GM10248 (cell line): ENCODE measurements at regions of chr3 and their contacts with region 1.

Region 1: DNA sequence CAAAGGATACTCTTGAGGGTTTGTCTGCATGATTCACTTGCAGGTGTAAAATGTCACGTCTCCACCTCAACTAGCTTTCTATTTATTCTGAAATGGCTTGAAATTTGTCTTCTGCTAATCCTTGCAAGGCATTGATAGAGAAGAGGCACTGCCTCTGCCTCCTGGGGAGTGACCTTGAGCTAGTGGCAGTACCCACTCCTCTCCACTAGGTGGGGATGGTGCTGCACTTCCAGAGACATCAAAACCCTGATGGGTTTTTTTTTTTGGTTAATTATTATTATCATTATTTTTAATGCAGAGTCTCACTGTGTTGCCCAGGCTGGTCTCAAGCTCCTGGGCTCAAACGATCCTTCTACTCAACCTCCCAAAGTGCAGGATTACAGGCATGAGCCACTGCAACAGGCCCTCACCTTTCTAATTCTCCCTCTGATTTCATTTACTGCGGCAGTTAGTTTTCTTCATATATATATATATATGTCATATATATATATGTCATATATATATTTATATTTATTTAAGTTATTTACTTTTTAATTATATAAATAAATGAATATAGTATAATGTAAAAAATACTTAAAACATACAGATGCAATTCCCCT is 117.6 kb upstream of the EIF1B start:
- DNase-seq: peak; percentile 73
- CTCF ChIP-seq: peak; percentile 82

Region 2: DNA sequence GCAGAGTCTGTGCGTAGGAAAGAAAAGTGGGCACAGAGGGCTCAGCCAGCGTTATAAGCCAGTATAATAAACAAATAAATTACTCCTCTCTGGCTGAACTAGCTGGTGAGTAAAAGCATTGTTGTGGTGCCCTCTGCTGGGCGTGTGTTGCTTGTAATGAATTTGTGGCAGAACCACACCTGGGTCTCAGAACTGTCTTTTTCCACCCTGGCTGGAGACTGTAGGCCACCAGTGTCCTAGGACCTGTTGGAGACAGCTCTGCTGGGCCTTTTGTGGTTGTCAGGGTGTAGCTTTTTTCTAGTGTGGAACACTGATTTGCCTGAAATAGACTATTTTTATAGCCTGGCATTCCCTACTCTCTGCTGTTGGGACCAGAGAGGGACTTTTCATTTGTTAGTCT is 12.9 kb before region 1 on chr3:
- CTCF ChIA-PET with region 1: interaction called, 162 read pairs
- POLR2A ChIA-PET with region 1: no interaction called
- DNase-seq: peak; percentile 54
- CTCF ChIP-seq: peak; percentile 78

Region 3: GRCh38 chr3:40243056-40243455 is 51.1 kb after region 1 on chr3:
- CTCF ChIA-PET with region 1: interaction called, 12 read pairs
- POLR2A ChIA-PET with region 1: no interaction called
- DNase-seq: no peak
- CTCF ChIP-seq: no peak

Region 4: DNA sequence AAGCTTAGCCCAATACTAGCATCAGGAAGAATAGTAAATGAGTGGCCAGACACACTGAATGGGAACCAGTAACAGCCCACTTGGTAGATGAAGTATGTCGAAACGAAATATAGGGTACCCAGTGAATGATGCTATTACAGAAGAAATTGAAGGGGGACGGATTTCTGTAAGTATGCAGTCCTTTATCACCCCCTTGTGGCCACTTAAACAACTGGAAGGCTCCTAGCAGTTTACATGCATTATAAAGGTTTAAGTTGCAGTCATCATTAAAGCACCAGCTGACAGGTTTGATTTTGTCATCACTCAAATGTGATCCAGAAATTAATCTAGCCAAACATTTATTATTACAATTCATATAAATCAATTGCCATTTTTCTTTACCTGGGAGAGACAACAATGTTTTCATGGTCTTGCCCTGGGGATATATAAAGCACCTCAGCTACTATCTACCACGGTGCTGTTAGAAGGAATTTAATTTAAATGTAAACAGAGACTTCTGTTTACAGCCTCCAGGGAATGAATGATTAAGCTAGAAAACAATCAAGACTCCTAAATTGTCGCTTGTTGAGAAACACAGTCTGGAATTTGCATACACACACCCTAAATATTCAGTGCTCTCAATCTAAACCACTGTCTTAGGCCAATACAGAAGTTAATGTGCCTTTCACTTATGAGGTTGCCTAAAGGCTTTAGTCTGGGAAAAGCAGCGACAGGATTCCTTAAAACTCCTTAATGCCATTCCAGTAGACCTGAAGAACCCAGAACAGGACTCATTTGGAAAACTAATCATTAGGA is 125.3 kb after region 1 on chr3:
- CTCF ChIA-PET with region 1: interaction called, 183 read pairs
- POLR2A ChIA-PET with region 1: no interaction called
- DNase-seq: peak; percentile 48
- CTCF ChIP-seq: peak; percentile 84

Region 5: GRCh38 chr3:40325465-40325864 is 133.5 kb after region 1 on chr3:
- CTCF ChIA-PET with region 1: interaction called, 11 read pairs
- POLR2A ChIA-PET with region 1: no interaction called
- DNase-seq: no peak
- CTCF ChIP-seq: no peak

Region 6: DNA sequence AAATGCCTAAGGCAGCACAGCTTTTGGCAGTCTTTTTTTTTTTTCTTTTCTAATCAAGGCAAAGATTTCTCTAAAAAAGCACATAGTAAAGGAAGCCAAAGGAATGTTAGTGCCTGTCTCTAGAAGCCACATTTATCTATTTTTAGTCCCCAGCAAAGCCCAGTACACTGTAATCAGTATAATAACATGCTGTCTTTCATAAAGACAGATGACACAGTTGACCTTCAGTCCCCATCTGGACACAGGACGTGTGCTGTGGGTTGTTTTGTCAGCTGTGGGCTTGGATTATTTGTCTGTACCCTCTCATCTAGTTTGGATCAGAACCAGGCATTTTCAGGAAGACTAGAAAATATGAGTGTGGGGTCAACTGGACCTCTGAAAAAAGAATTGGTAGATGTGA is 896.9 kb after region 1 on chr3:
- CTCF ChIA-PET with region 1: no interaction called
- POLR2A ChIA-PET with region 1: no interaction called
- DNase-seq: no peak
- CTCF ChIP-seq: no peak